ENCODE measurements at regions of chr21 and their contacts with region 1.

Region 1: GRCh38 chr21:33931799-33932390 is 16.3 kb upstream of the ATP5PO start:
- DNase-seq: no peak
- H3K4me3 Mint-ChIP-seq: peak overlapping the region; percentile 93
- H3K27ac Mint-ChIP-seq: peak overlapping the region; percentile 99
- H3K4me1 Mint-ChIP-seq: peaks cover 43% of the 10 kb centered on the region
- H3K27me3 Mint-ChIP-seq: no peaks in the 10 kb centered on the region

Region 2: DNA sequence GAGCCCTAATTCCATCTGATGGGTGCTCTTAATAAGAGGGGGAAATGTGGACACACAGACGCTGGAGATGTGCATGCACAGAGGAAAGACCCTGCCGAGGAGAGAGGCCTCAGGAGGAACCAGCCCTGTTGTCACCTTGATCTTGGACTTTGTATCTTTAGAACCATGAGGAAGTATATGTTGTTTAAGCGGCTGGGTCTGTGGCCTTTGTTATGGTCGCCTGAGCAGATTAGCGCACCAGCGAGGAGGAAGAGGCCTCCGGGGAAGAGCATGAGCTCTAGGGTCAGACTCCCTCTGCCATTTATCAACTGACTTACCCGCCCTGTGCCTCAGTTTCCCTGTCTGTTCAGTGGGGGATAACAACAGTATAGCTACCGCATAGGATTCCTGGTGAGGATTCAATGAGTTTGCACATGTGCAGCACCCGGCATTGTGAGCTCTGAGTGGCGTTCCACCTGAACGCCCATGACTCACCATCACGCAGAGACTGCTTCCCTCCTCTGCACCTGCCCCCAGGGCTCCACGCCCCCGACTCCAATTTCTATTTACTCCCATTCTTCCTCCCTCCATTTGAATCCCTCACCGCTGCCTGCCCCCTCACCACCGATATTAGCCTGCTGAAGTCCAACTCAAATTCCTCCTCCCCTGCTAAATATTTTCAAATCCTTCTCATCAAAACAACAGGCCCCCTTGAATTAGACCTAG is 83.5 kb before region 1 on chr21:
- CTCF ChIA-PET with region 1: no interaction called
- intact Hi-C with region 1: no loop called
- DNase-seq: no peak
- H3K4me3 Mint-ChIP-seq: no peak overlapping the region
- H3K27ac Mint-ChIP-seq: no peak overlapping the region
- H3K4me1 Mint-ChIP-seq: no peaks in the 10 kb centered on the region
- H3K27me3 Mint-ChIP-seq: no peaks in the 10 kb centered on the region

Region 3: GRCh38 chr21:33915368-33916199 is 16.3 kb before region 1 on chr21 and contains the start of gene ATP5PO:
- CTCF ChIA-PET with region 1: no interaction called
- intact Hi-C with region 1: loop called (anchors 2 kb)
- DNase-seq: peak; percentile 98
- H3K4me3 Mint-ChIP-seq: peak within 1 kb of the TSS; percentile 98
- H3K27ac Mint-ChIP-seq: peak within 1 kb of the TSS; percentile 95
- H3K4me1 Mint-ChIP-seq: peaks cover 27% of the 10 kb centered on the region
- H3K27me3 Mint-ChIP-seq: no peaks in the 10 kb centered on the region
- total RNA-seq, gene ATP5PO: 230 TPM

Region 4: GRCh38 chr21:33947451-33948095 is 15.7 kb after region 1 on chr21:
- CTCF ChIA-PET with region 1: interaction called, 5 read pairs
- intact Hi-C with region 1: loop called (anchors 1 kb)
- DNase-seq: peak; percentile 92
- H3K4me3 Mint-ChIP-seq: peak overlapping the region; percentile 65
- H3K27ac Mint-ChIP-seq: peak overlapping the region; percentile 97
- H3K4me1 Mint-ChIP-seq: peaks cover 77% of the 10 kb centered on the region
- H3K27me3 Mint-ChIP-seq: peaks cover 2% of the 10 kb centered on the region

Region 5: DNA sequence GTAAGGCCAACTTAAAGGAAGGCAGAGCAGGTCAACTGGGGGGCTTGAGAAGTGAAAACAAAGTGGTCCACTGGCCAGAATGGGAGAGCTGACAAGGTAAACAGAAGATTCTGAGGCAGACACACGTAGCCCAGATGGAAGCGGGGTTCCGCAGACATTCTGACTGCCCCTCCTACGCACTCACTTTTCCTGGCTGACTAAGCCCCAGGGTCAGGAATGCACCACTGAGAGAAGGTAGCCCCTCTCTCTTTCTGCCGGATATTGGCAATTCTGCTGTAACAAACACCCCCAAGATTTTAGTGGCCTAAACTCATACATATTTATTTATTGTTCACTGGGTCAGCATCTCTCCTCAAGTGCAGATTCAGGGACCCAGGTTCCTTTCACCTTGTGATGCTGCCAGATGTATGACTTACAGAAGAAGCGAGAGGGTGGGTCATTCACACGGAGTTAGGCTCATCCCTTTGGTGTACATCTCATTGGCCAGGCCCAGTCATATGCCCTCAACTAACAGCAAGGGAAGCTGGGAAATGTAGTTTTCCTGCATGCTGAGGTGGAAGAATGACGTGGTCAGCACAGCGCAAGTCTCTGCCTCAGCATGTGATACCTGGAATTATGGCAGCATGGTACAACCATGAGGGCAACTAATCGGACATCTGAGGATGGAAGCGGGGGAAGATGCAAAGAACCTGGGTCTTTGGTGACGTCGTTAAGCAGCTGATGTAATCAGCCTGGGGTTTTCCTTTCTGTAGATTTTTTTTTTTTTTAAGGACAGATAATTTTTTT is 98.0 kb after region 1 on chr21:
- CTCF ChIA-PET with region 1: no interaction called
- intact Hi-C with region 1: loop called (anchors 5 kb)
- DNase-seq: peak; percentile 72
- H3K4me3 Mint-ChIP-seq: peak overlapping the region; percentile 29
- H3K27ac Mint-ChIP-seq: peak overlapping the region; percentile 85
- H3K4me1 Mint-ChIP-seq: peaks cover 24% of the 10 kb centered on the region
- H3K27me3 Mint-ChIP-seq: no peaks in the 10 kb centered on the region

Region 6: GRCh38 chr21:34367321-34367935 is 435.5 kb after region 1 on chr21:
- CTCF ChIA-PET with region 1: no interaction called
- intact Hi-C with region 1: no loop called
- DNase-seq: peak; percentile 63
- H3K4me3 Mint-ChIP-seq: no peak overlapping the region
- H3K27ac Mint-ChIP-seq: no peak overlapping the region
- H3K4me1 Mint-ChIP-seq: no peaks in the 10 kb centered on the region
- H3K27me3 Mint-ChIP-seq: no peaks in the 10 kb centered on the region